Adrenal gland (tissue), 19 donors: ENCODE measurements at regions of chr11 and their contacts with region 1.

Region 1: DNA sequence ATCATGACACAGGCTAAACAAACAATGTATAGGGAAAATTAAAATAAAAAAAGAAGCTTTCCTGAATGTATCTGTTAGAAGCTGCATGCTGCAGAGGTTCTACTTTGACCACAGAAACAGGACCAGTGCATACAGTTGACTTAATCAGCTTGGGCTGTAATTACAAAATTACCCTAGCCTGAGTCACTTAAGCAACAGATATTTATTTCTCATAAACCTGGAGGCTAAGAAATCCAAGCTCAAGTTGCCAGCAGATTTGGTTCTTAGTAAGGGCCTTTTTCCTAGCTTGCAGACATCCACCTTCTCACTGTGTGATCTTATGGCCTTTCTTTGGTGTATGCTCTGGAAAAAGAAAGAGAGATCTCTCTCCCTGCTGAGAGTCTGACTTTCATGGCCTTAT is 946.5 kb upstream of the RAG2 start:
- DNase-seq: no peak
- H3K4me3 ChIP-seq: no peak overlapping the region
- H3K27ac ChIP-seq: no peak overlapping the region
- H3K4me1 ChIP-seq: no peaks in the 10 kb centered on the region
- H3K27me3 ChIP-seq: no peaks in the 10 kb centered on the region
- CTCF ChIP-seq: no peak
- POLR2A ChIP-seq: no peak

Region 2: GRCh38 chr11:38814670-38815069 is 1270.2 kb after region 1 on chr11:
- intact Hi-C with region 1: loop called in 1 of 2 experiments (anchors 10 kb)
- DNase-seq: no peak
- H3K4me3 ChIP-seq: no peak overlapping the region
- H3K27ac ChIP-seq: no peak overlapping the region
- H3K4me1 ChIP-seq: no peaks in the 10 kb centered on the region
- H3K27me3 ChIP-seq: no peaks in the 10 kb centered on the region
- CTCF ChIP-seq: no peak
- POLR2A ChIP-seq: no peak